ENCODE measurements at regions of chr15 and their contacts with region 1.

Region 1: DNA sequence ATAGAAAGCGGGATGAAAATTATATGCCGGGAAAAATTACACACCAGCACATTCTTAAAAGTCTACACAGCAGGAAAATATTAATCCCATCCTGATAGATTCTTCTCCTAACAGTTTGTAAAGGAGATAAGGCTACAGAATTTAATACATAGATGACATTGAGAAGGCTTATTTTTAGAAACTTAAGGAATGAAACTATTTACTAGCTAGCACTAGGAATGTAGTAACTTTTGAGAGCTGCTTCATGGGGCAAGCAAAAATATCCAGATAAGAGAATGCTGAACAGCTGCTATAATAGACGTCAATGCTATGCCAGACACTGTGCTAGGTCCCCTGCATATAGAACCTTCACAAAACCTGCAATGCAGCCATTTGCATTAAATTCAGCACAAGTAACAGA is 912.7 kb upstream of the NR2F2 start:
- DNase-seq: no peak
- H3K4me3 Mint-ChIP-seq: no peak overlapping the region
- H3K27ac Mint-ChIP-seq: no peak overlapping the region
- H3K4me1 Mint-ChIP-seq: no peaks in the 10 kb centered on the region
- H3K27me3 Mint-ChIP-seq: no peaks in the 10 kb centered on the region
- CTCF ChIP-seq: no peak

Region 2: GRCh38 chr15:95350908-95351307 is 66.9 kb before region 1 on chr15:
- CTCF ChIA-PET with region 1: no interaction called
- intact Hi-C with region 1: no loop called
- DNase-seq: no peak
- H3K4me3 Mint-ChIP-seq: no peak overlapping the region
- H3K27ac Mint-ChIP-seq: no peak overlapping the region
- H3K4me1 Mint-ChIP-seq: no peaks in the 10 kb centered on the region
- H3K27me3 Mint-ChIP-seq: no peaks in the 10 kb centered on the region
- CTCF ChIP-seq: no peak

Region 3: GRCh38 chr15:95429345-95429744 is 11.6 kb after region 1 on chr15:
- CTCF ChIA-PET with region 1: no interaction called
- intact Hi-C with region 1: loop called (anchors 1 kb)
- DNase-seq: no peak
- H3K4me3 Mint-ChIP-seq: no peak overlapping the region
- H3K27ac Mint-ChIP-seq: no peak overlapping the region
- H3K4me1 Mint-ChIP-seq: no peaks in the 10 kb centered on the region
- H3K27me3 Mint-ChIP-seq: no peaks in the 10 kb centered on the region
- CTCF ChIP-seq: no peak

Region 4: DNA sequence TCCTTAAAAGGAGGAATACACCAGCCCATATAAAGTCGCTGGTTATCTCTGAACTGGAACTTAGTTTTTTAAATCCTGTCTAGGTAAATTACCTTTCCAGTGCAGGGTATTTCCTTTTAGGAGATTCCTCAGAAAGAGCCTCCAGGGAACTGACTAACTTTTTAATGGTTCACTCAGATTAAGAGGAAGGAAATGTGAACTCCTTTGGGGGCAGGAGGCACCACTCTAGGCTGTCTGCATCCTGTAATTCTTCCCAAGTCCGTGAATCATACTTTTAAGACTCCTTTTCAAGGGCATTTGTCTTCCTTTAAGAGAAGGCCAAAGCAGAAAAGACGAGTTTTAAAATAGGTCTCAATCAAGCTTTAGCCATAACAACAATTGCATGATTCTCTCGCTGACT is 41.5 kb after region 1 on chr15:
- CTCF ChIA-PET with region 1: no interaction called
- intact Hi-C with region 1: no loop called
- DNase-seq: no peak
- H3K4me3 Mint-ChIP-seq: no peak overlapping the region
- H3K27ac Mint-ChIP-seq: no peak overlapping the region
- H3K4me1 Mint-ChIP-seq: no peaks in the 10 kb centered on the region
- H3K27me3 Mint-ChIP-seq: no peaks in the 10 kb centered on the region
- CTCF ChIP-seq: no peak

Measured in Calu3 (cell line).